ENCODE measurements at regions of chr11 and their contacts with region 1.

Region 1: DNA sequence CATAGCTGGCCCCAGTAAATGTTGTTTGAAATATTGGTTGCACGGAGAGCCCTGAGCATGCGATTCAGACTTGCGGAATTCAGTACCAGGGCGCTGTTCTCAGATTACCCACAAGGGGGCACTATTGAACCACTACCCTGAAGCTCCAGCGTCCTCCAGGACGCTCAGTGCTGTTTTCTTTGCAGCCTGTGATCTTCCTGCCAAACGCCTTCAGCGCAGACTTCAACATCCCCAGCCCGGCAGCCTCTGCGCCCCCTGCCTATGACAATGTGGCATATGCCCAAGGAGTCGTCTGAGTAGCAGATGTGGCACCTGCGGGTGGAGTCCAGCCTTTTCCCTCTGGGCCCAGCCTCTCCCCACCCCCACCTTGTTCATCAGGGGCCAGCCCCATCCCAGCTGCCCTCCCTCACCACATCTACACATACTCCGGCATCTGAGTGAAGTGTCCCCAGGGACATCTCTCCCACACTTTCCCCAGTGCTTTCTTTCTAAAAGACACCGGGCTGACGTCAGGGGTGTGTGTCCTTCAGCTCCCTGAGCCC is 9.6 kb upstream of the MS4A10 start:
- DNase-seq: peak; percentile 60 to 89
- ATAC-seq: peak; percentile 82 to 92 (median 88)
- H3K4me3 ChIP-seq: peak overlapping the region in 1 of 10 donors; percentile 12
- H3K27ac ChIP-seq: peak overlapping the region in 6 of 10 donors; percentile 4 to 59 (median 34)
- H3K4me1 ChIP-seq: peaks cover 4 to 33% (median 18%) of the 10 kb centered on the region in 9 donors
- H3K27me3 ChIP-seq: peaks cover 0 to 15% (median 3%) of the 10 kb centered on the region in 7 donors
- CTCF ChIP-seq: peak; percentile 87 to 96 (median 93)

Region 2: GRCh38 chr11:60563553-60564235 is 211.8 kb before region 1 on chr11:
- intact Hi-C with region 1: no loop called
- DNase-seq: no peak
- ATAC-seq: no peak
- H3K4me3 ChIP-seq: no peak overlapping the region
- H3K27ac ChIP-seq: no peak overlapping the region
- H3K4me1 ChIP-seq: peaks cover 0 to 3% (median 0%) of the 10 kb centered on the region in 9 donors
- H3K27me3 ChIP-seq: no peaks in the 10 kb centered on the region
- CTCF ChIP-seq: no peak

Region 3: DNA sequence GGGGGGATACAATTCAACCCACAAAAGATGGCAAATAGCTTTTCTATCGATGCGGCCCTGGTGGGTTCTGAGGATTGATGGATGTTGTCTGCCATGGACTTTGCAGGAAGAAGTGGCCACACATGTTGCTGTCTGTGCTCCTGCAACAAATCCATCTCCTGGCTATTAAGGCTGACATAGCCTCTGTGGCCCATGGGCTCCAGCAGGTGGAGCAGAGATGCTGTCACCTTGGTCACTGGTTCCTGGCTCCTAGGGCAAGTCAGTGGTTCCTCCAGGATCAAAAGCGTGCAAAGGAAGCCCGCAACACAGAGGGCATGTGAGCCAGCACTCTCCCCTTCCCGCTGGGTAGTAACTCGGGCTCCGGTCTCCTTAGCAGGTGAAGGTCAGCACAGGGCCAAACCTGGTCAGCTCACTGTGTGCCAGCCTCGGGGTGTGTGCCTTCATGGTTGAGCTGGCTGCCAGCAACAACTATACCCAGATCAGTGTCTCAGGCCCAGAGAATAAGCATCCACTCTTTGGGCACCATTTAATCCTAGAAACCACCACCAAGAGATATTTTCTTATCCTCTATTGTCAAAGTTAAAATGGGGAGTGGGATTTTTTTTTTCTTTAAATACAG is 50.2 kb after region 1 on chr11:
- intact Hi-C with region 1: loop called in 4 of 10 experiments (anchors 5 kb)
- DNase-seq: no peak
- ATAC-seq: no peak
- H3K4me3 ChIP-seq: no peak overlapping the region
- H3K27ac ChIP-seq: no peak overlapping the region
- H3K4me1 ChIP-seq: peaks cover 0 to 4% (median 0%) of the 10 kb centered on the region in 9 donors
- H3K27me3 ChIP-seq: no peaks in the 10 kb centered on the region
- CTCF ChIP-seq: no peak

Region 4: GRCh38 chr11:60831143-60831500 is 55.6 kb after region 1 on chr11:
- intact Hi-C with region 1: loop called in 4 of 10 experiments (anchors 5 kb)
- DNase-seq: peak; percentile 81 to 86
- ATAC-seq: peak; percentile 83 to 94 (median 89)
- H3K4me3 ChIP-seq: no peak overlapping the region
- H3K27ac ChIP-seq: no peak overlapping the region
- H3K4me1 ChIP-seq: peaks cover 0 to 30% (median 0%) of the 10 kb centered on the region in 9 donors
- H3K27me3 ChIP-seq: no peaks in the 10 kb centered on the region
- CTCF ChIP-seq: peak; percentile 92 to 98 (median 94)

Region 5: DNA sequence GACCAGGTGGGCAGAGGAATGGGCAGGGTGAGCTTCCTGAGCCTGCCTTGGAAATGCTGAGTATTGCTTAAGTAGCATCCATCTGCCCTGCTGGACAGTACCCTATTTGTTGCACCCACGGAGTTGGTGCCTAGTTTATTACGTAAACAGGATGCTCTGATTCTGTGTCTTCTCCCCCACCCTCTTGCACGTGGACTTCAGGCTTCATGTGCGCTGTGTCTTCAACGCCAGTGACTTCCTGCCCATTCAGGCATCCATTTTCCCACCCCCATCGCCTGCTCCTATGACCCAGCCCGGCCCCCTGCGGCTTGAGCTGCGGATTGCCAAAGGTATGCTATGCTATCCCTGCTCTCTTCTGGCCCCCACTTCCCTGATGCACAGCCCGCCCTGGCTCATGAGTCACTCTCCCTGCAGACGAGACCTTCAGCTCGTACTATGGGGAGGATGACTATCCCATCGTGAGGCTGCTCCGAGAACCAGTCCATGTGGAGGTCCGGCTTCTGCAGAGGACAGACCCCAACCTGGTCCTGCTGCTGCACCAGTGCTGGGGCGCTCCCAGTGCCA is 97.6 kb after region 1 on chr11:
- intact Hi-C with region 1: no loop called
- DNase-seq: no peak
- ATAC-seq: peak in 3 of 8 donors; percentile 17 to 60 (median 34)
- H3K4me3 ChIP-seq: no peak overlapping the region
- H3K27ac ChIP-seq: peak overlapping the region in 8 of 10 donors; percentile 22 to 69 (median 54)
- H3K4me1 ChIP-seq: peaks cover 3 to 64% (median 38%) of the 10 kb centered on the region in 9 donors
- H3K27me3 ChIP-seq: no peaks in the 10 kb centered on the region
- CTCF ChIP-seq: no peak

Region 6: DNA sequence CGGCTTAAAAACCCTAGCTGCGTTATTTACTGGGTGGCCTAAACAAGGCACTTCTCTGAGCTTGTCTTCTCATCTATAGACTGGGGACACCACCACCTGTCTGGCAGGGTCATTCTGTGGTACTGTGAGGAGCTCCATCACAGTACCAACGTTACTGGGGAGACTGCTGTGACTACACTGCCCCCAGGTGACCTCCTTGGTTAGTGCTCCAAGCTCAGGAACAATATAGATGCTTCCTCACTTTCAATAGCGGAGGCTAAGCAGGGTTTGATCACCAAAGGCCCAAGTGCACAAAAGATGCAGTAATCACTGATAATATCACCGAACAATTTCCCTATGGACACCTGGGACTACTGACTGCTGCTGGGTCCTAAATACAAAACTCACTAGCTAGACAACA is 112.1 kb after region 1 on chr11:
- intact Hi-C with region 1: loop called in 4 of 10 experiments (anchors 5 to 10 kb)
- DNase-seq: peak in 1 of 2 donors; percentile 43
- ATAC-seq: peak; percentile 65 to 86 (median 80)
- H3K4me3 ChIP-seq: no peak overlapping the region
- H3K27ac ChIP-seq: no peak overlapping the region
- H3K4me1 ChIP-seq: peaks cover 3 to 22% (median 15%) of the 10 kb centered on the region in 9 donors
- H3K27me3 ChIP-seq: no peaks in the 10 kb centered on the region
- CTCF ChIP-seq: peak in 8 of 9 donors; percentile 41 to 66 (median 62)

Region 7: DNA sequence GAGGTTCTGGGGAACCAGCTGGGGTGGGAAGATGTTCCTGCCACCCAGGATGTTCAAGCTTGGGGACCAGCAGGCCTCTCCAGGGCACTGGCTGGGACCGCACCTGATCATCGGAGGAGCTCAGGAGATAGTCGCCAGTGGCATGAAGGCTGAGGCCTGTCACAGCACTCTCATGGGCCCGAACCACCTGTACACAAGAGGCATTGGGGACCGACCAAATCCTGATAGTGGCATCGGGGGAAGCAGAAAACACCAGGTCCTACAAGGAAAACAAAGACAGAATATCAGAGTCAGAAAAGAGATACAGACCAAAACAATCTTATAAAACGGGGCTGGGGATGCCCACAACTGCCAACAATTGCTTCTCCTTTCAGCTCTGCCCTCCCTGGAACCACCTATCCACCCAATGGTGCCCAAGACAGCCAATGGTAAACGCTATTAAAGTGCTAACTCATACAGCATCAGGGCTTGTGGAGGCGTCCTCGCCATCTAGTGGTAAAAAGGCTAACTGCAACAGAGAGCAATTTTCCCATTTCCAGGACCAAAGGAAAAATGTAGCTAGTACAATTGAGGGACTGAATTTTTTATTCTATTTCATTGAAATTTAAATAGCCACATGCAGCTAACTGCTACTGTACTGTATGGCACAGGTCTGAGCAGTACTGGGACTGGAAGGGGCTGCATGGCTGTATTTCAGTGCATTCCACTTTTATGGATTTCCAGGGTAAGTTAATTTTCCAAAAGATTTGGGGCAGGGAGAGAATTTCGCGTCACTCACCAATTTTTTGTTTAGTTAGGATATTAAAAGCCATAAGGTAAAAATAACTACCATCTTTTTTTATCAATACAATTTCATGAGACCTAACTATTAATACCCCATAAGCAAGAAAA is 123.8 kb after region 1 on chr11:
- intact Hi-C with region 1: loop called in 8 of 10 experiments (anchors 5 to 10 kb)
- DNase-seq: no peak
- ATAC-seq: peak in 7 of 8 donors; percentile 54 to 74 (median 69)
- H3K4me3 ChIP-seq: no peak overlapping the region
- H3K27ac ChIP-seq: peak overlapping the region in 1 of 10 donors; percentile 9
- H3K4me1 ChIP-seq: peaks cover 0 to 17% (median 6%) of the 10 kb centered on the region in 9 donors
- H3K27me3 ChIP-seq: no peaks in the 10 kb centered on the region
- CTCF ChIP-seq: peak; percentile 93 to 99 (median 95)

Region 8: GRCh38 chr11:61187505-61188130 is 412.1 kb after region 1 on chr11:
- intact Hi-C with region 1: loop called in 1 of 10 experiments (anchors 5 kb)
- DNase-seq: peak; percentile 56 to 76
- ATAC-seq: peak in 7 of 8 donors; percentile 46 to 81 (median 71)
- H3K4me3 ChIP-seq: no peak overlapping the region
- H3K27ac ChIP-seq: no peak overlapping the region
- H3K4me1 ChIP-seq: peaks cover 0 to 4% (median 0%) of the 10 kb centered on the region in 9 donors
- H3K27me3 ChIP-seq: peaks cover 0 to 45% (median 5%) of the 10 kb centered on the region in 7 donors
- CTCF ChIP-seq: peak; percentile 80 to 96 (median 93)